ENCODE measurements at regions of chr14 and their contacts with region 1.

Region 1: GRCh38 chr14:63276492-63277342 is 42.0 kb downstream of the GPHB5 start:
- DNase-seq: peak; percentile 76
- ATAC-seq: peak; percentile 84
- H3K4me3 ChIP-seq: no peak overlapping the region
- H3K27ac ChIP-seq: no peak overlapping the region
- H3K4me1 ChIP-seq: no peaks in the 10 kb centered on the region
- H3K27me3 ChIP-seq: peaks cover 43% of the 10 kb centered on the region
- CTCF ChIP-seq: peak; percentile 98

Region 2: GRCh38 chr14:63039800-63040380 is 236.8 kb before region 1 on chr14:
- CTCF ChIA-PET with region 1: no interaction called
- POLR2A ChIA-PET with region 1: no interaction called
- intact Hi-C with region 1: loop called (anchors 1 kb)
- DNase-seq: peak; percentile 86
- ATAC-seq: peak; percentile 100
- H3K4me3 ChIP-seq: no peak overlapping the region
- H3K27ac ChIP-seq: no peak overlapping the region
- H3K4me1 ChIP-seq: no peaks in the 10 kb centered on the region
- H3K27me3 ChIP-seq: peaks cover 62% of the 10 kb centered on the region
- CTCF ChIP-seq: peak; percentile 71

Region 3: GRCh38 chr14:63174760-63175211 is 101.9 kb before region 1 on chr14:
- CTCF ChIA-PET with region 1: interaction called, 3 read pairs
- POLR2A ChIA-PET with region 1: no interaction called
- intact Hi-C with region 1: loop called (anchors 1 kb)
- DNase-seq: peak; percentile 63
- ATAC-seq: peak; percentile 47
- H3K4me3 ChIP-seq: no peak overlapping the region
- H3K27ac ChIP-seq: no peak overlapping the region
- H3K4me1 ChIP-seq: peaks cover 12% of the 10 kb centered on the region
- H3K27me3 ChIP-seq: 0 out of 2 replicates have a peak, but pooled peaks cover 18% of the 10 kb centered on the region
- CTCF ChIP-seq: peak; percentile 83

Region 4: GRCh38 chr14:63212209-63212608 is 64.5 kb before region 1 on chr14:
- CTCF ChIA-PET with region 1: no interaction called
- POLR2A ChIA-PET with region 1: no interaction called
- intact Hi-C with region 1: no loop called
- DNase-seq: no peak
- ATAC-seq: no peak
- H3K4me3 ChIP-seq: no peak overlapping the region
- H3K27ac ChIP-seq: no peak overlapping the region
- H3K4me1 ChIP-seq: no peaks in the 10 kb centered on the region
- H3K27me3 ChIP-seq: peaks cover 38% of the 10 kb centered on the region
- CTCF ChIP-seq: no peak; the same call in 1 of the 2 replicates

Region 5: GRCh38 chr14:63229330-63230059 is 47.2 kb before region 1 on chr14:
- CTCF ChIA-PET with region 1: no interaction called
- POLR2A ChIA-PET with region 1: no interaction called
- intact Hi-C with region 1: no loop called
- DNase-seq: no peak
- ATAC-seq: no peak
- H3K4me3 ChIP-seq: no peak overlapping the region
- H3K27ac ChIP-seq: no peak overlapping the region
- H3K4me1 ChIP-seq: no peaks in the 10 kb centered on the region
- H3K27me3 ChIP-seq: peaks cover 71% of the 10 kb centered on the region
- CTCF ChIP-seq: no peak